Gastrocnemius medialis (tissue), 4 donors: ENCODE measurements at regions of chr17 and their contacts with region 1.

Region 1: DNA sequence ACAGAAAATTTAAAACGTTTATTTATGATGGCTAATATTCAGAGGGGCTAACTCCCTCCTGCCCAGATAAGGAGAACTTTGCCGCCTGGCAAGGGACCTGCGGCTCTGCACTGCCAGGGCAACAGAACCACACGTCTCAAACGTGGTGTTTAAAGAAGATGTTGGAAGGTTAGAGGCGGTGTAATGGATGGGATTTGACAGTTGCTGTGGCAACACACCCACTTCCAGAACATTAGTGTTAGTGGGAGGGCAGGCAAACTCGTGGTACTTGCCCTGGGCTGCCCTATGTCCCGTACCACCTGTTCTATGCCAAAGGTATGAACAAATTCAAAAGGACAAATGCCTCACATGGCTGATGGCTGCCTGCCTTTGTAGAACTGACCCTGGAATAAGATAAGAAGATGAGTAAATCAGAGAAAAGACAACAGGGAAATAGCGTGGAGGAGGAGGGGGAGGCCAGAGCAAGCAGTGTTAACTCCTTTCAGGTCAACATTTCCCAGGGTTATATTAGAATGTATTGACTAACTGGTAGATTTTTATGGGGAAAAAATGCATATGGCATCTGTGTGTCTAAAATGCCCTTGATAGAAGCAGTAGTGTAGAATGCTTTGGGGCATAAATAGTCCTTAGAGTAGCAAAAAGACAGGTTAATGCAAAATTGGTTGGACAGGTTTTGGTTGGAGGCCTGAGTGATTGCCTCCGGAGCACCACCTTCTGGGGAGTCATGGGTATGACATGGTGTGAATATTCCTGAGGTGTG is 30.8 kb downstream of the HLF start:
- DNase-seq: peak; percentile 18 to 40
- ATAC-seq: peak; percentile 79 to 87
- H3K4me3 ChIP-seq: no peak overlapping the region
- H3K27ac ChIP-seq: peak overlapping the region in 2 of 4 donors; percentile 15 to 16
- H3K4me1 ChIP-seq: peaks cover 0 to 4% of the 10 kb centered on the region in 2 donors
- H3K27me3 ChIP-seq: no peaks in the 10 kb centered on the region
- CTCF ChIP-seq: peak; percentile 64 to 87 (median 83)
- POLR2A ChIP-seq: no peak

Region 2: GRCh38 chr17:54992797-54993639 is 302.6 kb before region 1 on chr17:
- in situ Hi-C with region 1: loop called in 2 of 4 experiments (anchors 5 to 10 kb)
- intact Hi-C with region 1: loop called (anchors 2 kb)
- DNase-seq: no peak
- ATAC-seq: peak; percentile 39 to 69
- H3K4me3 ChIP-seq: no peak overlapping the region
- H3K27ac ChIP-seq: no peak overlapping the region
- H3K4me1 ChIP-seq: no peaks in the 10 kb centered on the region
- H3K27me3 ChIP-seq: no peaks in the 10 kb centered on the region
- CTCF ChIP-seq: peak; percentile 37 to 69 (median 56)
- POLR2A ChIP-seq: no peak

Region 3: GRCh38 chr17:55053855-55054254 is 241.7 kb before region 1 on chr17:
- in situ Hi-C with region 1: loop called in 1 of 4 experiments (anchors 10 kb)
- intact Hi-C with region 1: no loop called
- DNase-seq: no peak
- ATAC-seq: no peak
- H3K4me3 ChIP-seq: no peak overlapping the region
- H3K27ac ChIP-seq: no peak overlapping the region
- H3K4me1 ChIP-seq: no peaks in the 10 kb centered on the region
- H3K27me3 ChIP-seq: no peaks in the 10 kb centered on the region
- CTCF ChIP-seq: peak in 1 of 5 experiments; percentile 21
- POLR2A ChIP-seq: no peak

Region 4: GRCh38 chr17:55238179-55238930 is 57.2 kb before region 1 on chr17:
- in situ Hi-C with region 1: no loop called
- intact Hi-C with region 1: loop called (anchors 2 kb)
- DNase-seq: peak; percentile 86 to 92
- ATAC-seq: peak; percentile 96 to 97
- H3K4me3 ChIP-seq: peak overlapping the region; percentile 56 to 67 (median 61)
- H3K27ac ChIP-seq: peak overlapping the region; percentile 74 to 86 (median 82)
- H3K4me1 ChIP-seq: peaks cover 10 to 11% of the 10 kb centered on the region in 2 donors
- H3K27me3 ChIP-seq: no peaks in the 10 kb centered on the region
- CTCF ChIP-seq: peak in 3 of 5 experiments; percentile 12 to 21 (median 21)
- POLR2A ChIP-seq: peak in 1 of 2 donors; percentile 68

Region 5: GRCh38 chr17:55264645-55265298 is 30.8 kb before region 1 on chr17 and contains the start of gene HLF:
- in situ Hi-C with region 1: no loop called
- intact Hi-C with region 1: loop called (anchors 1 kb)
- DNase-seq: peak; percentile 59 to 72
- ATAC-seq: peak; percentile 85
- H3K4me3 ChIP-seq: peak within 1 kb of the TSS; percentile 66 to 88 (median 72)
- H3K27ac ChIP-seq: peak within 1 kb of the TSS; percentile 78 to 92 (median 78)
- H3K4me1 ChIP-seq: peaks cover 19 to 29% of the 10 kb centered on the region in 2 donors
- H3K27me3 ChIP-seq: no peaks in the 10 kb centered on the region
- CTCF ChIP-seq: peak in 2 of 5 experiments; percentile 8 to 19
- POLR2A ChIP-seq: peak; percentile 79 to 82
- total RNA-seq, gene HLF: 7.7 to 14.8 (median 10.4) TPM